Activated CD8-positive, alpha-beta T cell treated with anti-CD3 and anti-CD28 coated beads for 36 hours (primary cell): ENCODE measurements at regions of chr10 and their contacts with region 1.

Region 1: DNA sequence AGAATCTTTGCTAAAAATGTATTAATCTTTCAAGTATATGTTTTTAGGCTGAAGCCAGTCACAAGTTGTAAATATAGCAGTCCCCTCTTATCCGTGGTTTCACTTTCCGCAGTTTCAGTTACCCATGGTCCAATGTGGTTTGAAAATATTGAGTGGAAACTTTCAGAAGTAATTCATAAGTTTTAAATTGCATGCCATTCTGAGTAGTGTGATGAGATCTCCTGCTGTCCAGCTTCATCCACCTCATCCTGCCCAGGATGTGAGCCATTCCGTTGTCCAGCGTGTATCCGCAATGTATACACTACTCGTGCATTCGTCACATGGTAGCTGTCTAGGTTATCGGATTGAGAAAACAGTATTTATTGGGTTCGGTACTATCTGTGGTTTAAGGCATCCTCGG is 12.2 kb downstream of the PDCD4 start:
- DNase-seq: no peak
- ATAC-seq: peak; percentile 62
- H3K4me3 Mint-ChIP-seq: peak overlapping the region; percentile 54
- H3K27ac Mint-ChIP-seq: peak overlapping the region; percentile 81
- H3K4me1 Mint-ChIP-seq: peaks cover 67% of the 10 kb centered on the region
- H3K27me3 Mint-ChIP-seq: no peaks in the 10 kb centered on the region
- CTCF ChIP-seq: no peak

Region 2: DNA sequence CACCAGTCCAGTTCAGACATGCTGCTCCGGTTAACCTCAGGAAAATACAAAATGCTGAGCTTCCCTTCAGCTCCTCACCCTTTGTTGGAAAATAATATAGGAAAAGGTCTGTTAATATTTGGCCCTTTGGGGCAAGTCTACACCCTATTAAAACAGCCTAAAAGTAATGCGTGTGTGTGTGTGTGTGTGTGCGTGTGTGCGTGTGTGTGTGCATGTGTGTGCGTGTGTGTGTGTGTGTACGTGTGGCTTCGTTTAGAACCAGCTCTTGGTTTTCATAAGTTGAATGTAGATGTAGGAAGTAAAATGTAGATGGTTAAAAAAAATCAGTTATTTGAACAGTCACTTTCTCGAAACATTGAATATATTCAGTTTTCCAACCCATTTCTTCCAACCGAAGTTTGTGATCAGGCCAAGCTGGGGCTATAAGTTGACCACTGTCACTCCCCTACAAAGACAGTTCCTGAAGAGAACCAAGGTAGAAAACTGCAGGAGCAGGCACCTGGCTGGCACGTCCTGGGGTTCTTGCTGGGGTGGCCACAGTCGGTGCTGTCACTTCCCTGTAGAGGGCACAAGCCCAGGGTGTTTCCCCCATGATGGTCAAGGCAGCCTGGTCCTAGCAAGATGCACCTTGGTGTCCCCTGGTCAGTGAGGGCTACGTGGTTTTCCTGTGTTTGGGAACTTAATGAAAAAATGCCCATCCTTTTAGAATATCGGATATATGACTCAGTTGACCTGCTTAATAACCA is 73.1 kb before region 1 on chr10:
- CTCF ChIA-PET with region 1: no interaction called
- POLR2A ChIA-PET with region 1: no interaction called
- intact Hi-C with region 1: no loop called
- DNase-seq: no peak
- ATAC-seq: no peak
- H3K4me3 Mint-ChIP-seq: no peak overlapping the region
- H3K27ac Mint-ChIP-seq: no peak overlapping the region
- H3K4me1 Mint-ChIP-seq: peaks cover 33% of the 10 kb centered on the region
- H3K27me3 Mint-ChIP-seq: no peaks in the 10 kb centered on the region
- CTCF ChIP-seq: no peak

Region 3: DNA sequence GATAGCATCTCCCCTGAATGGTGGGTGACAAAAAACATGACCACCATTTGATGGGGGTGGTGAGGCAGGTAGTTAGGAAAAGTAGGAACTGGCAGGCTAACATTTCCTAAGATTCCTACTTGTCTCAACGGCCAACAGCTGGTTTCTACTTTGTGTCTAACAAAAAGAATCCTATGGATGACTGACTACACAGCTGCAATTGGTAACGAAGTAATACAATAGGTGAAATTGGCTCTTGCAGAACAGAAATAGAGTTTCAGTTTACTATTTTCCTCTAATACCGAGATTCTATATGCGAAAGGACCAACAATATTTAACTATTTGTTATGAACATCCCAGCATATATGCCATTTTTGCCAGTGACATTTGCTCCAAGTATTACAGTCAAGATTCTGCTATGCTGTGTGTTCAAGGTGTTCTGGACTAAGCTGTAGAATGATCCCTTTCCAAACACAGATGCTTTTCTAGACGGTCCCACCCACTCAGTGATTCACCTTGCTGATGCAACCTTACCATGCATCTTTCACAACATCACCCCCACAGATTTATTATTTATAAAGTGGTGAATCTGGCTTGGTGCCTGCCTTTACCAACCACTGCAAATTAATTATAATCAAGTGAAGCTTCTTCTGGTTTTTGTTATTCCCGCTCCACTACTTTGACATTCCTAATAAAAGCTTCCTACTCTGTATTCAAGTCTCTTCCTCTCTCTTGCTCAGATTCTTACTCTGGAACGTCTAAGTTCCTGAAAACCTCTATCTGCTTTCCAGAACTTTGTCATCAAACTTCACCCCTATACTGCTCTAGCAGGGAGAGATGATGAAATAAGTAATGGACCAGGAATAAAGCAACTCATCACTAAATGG is 18.3 kb after region 1 on chr10:
- CTCF ChIA-PET with region 1: interaction called, 10 read pairs
- POLR2A ChIA-PET with region 1: interaction called, 4 read pairs
- intact Hi-C with region 1: no loop called
- DNase-seq: peak; percentile 79
- ATAC-seq: peak; percentile 63
- H3K4me3 Mint-ChIP-seq: peak overlapping the region; percentile 20
- H3K27ac Mint-ChIP-seq: peak overlapping the region; percentile 90
- H3K4me1 Mint-ChIP-seq: peaks cover 51% of the 10 kb centered on the region
- H3K27me3 Mint-ChIP-seq: no peaks in the 10 kb centered on the region
- CTCF ChIP-seq: no peak